ENCODE measurements at regions of chr16 and their contacts with region 1.

Region 1: DNA sequence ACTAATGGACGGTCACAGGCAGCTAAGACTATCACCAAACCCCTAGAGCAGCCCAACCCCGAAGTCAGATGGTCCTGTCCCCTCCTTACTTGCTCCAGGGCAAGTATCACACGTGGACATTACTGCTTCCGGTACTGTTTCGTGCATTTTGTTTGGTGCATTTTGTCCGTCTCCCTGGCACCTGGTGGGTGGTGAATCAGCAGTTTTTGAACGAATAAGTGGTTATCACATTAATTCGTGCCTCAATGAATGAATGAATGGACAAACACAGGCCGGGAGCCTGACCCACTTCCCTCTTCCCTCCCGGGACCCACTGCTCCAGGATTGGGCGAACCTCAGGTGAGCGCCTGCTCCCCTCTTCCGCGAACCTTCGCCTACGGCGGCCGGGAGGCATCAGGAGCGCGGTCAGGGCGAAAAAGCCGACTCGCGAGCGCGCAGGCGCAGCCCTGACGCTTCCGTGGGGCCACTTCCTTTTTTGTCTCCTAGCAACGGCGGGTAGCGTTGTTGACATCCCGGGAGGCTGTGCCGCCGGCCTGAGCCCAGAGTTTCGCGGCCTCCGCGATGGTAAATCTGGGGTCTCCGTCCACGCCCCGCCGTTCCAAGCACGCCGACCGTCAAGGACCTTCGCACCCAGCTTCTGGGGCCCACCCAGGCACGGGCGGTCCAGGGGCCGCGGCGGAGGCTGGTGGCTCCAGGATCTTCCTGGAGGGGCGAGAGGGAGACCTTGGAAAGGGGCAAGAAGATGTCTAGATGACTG is at the start of gene DYNLRB2:
- DNase-seq: peak; percentile 95
- H3K4me3 ChIP-seq: peak within 1 kb of the TSS; percentile 52 to 63 (median 52)
- H3K27ac ChIP-seq: peak within 1 kb of the TSS; percentile 66 to 79 (median 70)
- H3K4me1 ChIP-seq: peaks cover 0 to 19% (median 3%) of the 10 kb centered on the region in 4 donors
- H3K27me3 ChIP-seq: peaks cover 28% of the 10 kb centered on the region
- CTCF ChIP-seq: no peak
- EP300 ChIP-seq: no peak
- POLR2A ChIP-seq: peak; percentile 49
- total RNA-seq, gene DYNLRB2: not detected

Region 2: GRCh38 chr16:80346111-80346632 is 194.5 kb before region 1 on chr16:
- in situ Hi-C with region 1: no loop called
- intact Hi-C with region 1: no loop called
- DNase-seq: no peak
- H3K4me3 ChIP-seq: no peak overlapping the region
- H3K27ac ChIP-seq: no peak overlapping the region
- H3K4me1 ChIP-seq: peaks cover 0 to 6% (median 0%) of the 10 kb centered on the region in 4 donors
- H3K27me3 ChIP-seq: no peaks in the 10 kb centered on the region
- CTCF ChIP-seq: no peak
- EP300 ChIP-seq: no peak
- POLR2A ChIP-seq: no peak

Region 3: DNA sequence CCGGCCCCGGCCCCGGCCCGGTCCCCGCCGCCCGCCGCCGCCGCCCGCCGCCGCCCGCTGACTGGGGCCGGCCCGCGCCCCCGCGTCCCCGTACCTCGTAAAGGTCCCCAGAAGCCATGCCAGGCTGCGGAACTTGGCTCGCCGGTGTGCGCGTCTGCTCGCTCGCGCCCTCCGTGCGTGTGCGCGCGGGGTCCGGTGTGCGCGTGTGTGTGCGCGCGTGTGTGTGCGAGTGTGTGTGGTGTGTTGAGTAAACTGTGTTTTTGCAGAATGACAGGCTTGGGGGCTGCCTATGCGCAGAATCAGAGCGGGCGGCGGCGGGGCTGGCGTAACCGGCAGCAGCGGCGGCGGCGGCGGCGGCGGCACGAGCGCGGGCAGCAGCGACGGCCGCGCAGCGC is 263.4 kb after region 1 on chr16:
- in situ Hi-C with region 1: loop called (anchors 25 kb)
- intact Hi-C with region 1: no loop called
- DNase-seq: peak; percentile 34
- H3K4me3 ChIP-seq: peak overlapping the region; percentile 59 to 78 (median 60)
- H3K27ac ChIP-seq: peak overlapping the region in 3 of 4 donors; percentile 51 to 79 (median 56)
- H3K4me1 ChIP-seq: peaks cover 0 to 10% (median 2%) of the 10 kb centered on the region in 4 donors
- H3K27me3 ChIP-seq: no peaks in the 10 kb centered on the region
- CTCF ChIP-seq: no peak
- EP300 ChIP-seq: no peak
- POLR2A ChIP-seq: no peak